AG04449 (cell line): ENCODE measurements at regions of chr13 and their contacts with region 1.

Region 1: DNA sequence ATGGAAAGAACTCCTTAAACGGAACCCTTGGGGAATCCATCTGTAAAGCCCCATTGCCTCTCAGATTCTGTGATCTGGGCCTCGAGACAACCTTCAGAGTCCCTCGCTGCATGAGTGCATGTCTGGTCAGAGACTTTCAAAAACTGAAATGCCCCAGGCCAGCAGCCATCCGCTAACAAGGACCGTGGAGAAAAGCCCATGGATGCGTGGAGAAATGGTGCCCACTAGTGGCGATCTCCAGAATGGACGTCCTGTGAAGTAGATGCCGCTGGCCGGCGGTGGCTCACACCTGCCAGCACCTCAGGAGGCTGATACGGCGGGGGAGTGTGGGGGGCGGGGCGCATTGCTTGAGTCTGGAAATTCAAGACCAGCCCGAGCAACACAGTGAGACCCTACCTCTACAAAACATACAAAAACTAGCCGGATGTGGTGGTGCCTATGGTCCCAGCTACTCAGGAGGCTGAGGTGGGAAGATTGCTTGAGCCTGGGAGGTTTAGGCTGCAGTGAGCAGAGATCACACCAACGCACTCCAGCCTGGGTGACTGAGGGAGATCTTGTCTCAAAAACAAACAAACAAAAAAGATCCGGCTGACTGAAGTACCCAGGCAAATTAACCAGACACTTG is 7.9 kb upstream of the CDC16 start:
- DNase-seq: no peak
- H3K4me3 ChIP-seq: no peak overlapping the region
- CTCF ChIP-seq: peak; percentile 96

Region 2: DNA sequence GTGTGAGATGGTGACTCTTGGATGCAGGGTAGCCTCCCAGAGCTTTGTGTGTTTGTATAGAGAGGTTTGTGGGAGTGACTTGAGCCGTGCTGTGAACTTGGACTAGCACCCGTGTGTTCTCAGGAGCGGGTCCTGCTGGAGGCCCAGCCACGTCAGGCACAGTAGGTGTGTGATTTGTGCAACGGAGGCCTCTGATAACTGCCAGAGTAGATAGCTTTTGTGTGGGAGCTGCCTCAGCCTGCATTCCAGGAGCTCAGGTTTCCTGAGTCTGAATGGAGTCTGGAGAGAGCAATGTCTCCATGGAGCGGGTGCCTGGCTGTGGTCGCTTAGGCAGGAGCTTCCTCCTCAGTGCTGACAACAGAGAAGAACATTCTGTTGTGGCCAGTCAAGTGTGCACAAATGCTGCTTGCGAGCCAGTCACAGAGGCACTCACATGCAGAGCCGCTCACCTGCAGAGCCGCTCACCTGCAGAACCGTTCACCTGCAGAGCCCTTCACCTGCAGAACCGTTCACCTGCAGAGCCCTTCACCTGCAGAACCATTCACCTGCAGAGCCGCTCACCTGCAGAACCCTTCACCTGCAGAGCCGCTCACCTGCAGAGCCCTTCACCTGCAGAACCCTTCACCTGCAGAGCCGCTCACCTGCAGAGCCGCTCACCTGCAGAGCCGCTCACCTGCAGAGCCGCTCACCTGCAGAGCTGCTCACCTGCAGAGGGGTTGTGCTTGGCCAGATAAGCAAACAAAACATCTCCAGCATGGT is 609.6 kb before region 1 on chr13:
- CTCF ChIA-PET with region 1: no interaction called
- POLR2A ChIA-PET with region 1: no interaction called
- DNase-seq: no peak
- H3K4me3 ChIP-seq: no peak overlapping the region
- CTCF ChIP-seq: no peak

Region 3: GRCh38 chr13:113947321-113948033 is 279.3 kb before region 1 on chr13:
- CTCF ChIA-PET with region 1: interaction called, 10 read pairs
- POLR2A ChIA-PET with region 1: no interaction called
- DNase-seq: no peak
- H3K4me3 ChIP-seq: no peak overlapping the region
- CTCF ChIP-seq: peak; percentile 83

Region 4: GRCh38 chr13:114025714-114026431 is 200.9 kb before region 1 on chr13:
- CTCF ChIA-PET with region 1: interaction called, 10 read pairs
- POLR2A ChIA-PET with region 1: no interaction called
- DNase-seq: no peak
- H3K4me3 ChIP-seq: no peak overlapping the region
- CTCF ChIP-seq: peak; percentile 20